CD8-positive, alpha-beta T cell (primary cell): ENCODE measurements at regions of chr5 and their contacts with region 1.

Region 1: GRCh38 chr5:135944967-135945560 is 9.7 kb downstream of the LECT2 start:
- DNase-seq: peak in 3 of 9 experiments; percentile 7 to 63 (median 56)
- ATAC-seq: no peak
- H3K4me3 ChIP-seq: no peak overlapping the region
- H3K4me3 Mint-ChIP-seq: no peak overlapping the region
- H3K27ac ChIP-seq: no peak overlapping the region
- H3K27ac Mint-ChIP-seq: no peak overlapping the region
- H3K4me1 ChIP-seq: no peaks in the 10 kb centered on the region
- H3K4me1 Mint-ChIP-seq: no peaks in the 10 kb centered on the region
- H3K27me3 ChIP-seq: no peaks in the 10 kb centered on the region
- H3K27me3 Mint-ChIP-seq: peaks cover 16% of the 10 kb centered on the region
- CTCF ChIP-seq: peak; percentile 69

Region 2: GRCh38 chr5:136062366-136063274 is 117.6 kb after region 1 on chr5:
- CTCF ChIA-PET with region 1: interaction called, 4 read pairs
- POLR2A ChIA-PET with region 1: no interaction called
- intact Hi-C with region 1: loop called (anchors 1 to 2 kb)
- DNase-seq: peak in 2 of 9 experiments; percentile 51 to 57
- ATAC-seq: peak; percentile 55
- H3K4me3 ChIP-seq: no peak overlapping the region
- H3K4me3 Mint-ChIP-seq: no peak overlapping the region
- H3K27ac ChIP-seq: no peak overlapping the region
- H3K27ac Mint-ChIP-seq: no peak overlapping the region
- H3K4me1 ChIP-seq: no peaks in the 10 kb centered on the region
- H3K4me1 Mint-ChIP-seq: no peaks in the 10 kb centered on the region
- H3K27me3 ChIP-seq: no peaks in the 10 kb centered on the region
- H3K27me3 Mint-ChIP-seq: peaks cover 7% of the 10 kb centered on the region
- CTCF ChIP-seq: peak; percentile 14

Region 3: DNA sequence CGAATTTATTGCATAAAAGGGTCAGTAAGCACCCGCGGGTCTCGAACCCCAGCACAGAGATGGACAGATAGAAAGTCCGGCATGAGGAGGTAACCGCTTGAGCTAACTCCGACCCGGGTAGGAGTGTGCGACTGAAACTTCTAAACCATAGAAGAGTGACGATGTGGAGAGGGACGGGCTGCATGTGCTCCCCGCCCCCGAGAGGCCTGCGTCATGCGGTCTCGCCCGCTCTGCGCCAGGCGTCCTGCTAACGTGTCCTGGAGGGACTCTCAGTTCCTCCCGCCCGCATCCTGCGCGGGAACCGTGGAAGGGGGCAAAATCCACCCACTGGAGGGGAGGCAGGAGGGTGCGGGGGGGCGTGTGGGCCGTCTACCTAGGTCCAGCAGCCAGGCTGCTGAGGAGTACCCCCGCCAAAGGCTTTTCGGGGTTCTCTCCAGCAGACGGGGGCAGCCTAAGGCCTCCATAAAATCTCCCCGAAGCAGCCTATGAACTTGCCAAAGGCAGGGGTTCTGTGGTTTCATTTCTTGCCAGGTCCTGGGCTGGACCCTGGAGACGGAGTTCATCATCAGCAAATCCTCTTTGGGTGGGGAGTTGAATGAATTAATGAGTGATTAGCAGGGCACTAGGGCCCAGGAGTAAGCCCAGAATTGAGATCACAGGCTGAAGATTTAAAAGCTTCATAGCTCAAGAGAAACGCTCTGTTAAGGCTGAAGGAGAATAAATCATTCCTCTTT is 135.6 kb after region 1 on chr5:
- CTCF ChIA-PET with region 1: interaction called, 13 read pairs
- POLR2A ChIA-PET with region 1: no interaction called
- intact Hi-C with region 1: loop called (anchors 1 kb)
- DNase-seq: peak; percentile 10 to 75 (median 44)
- ATAC-seq: peak; percentile 96
- H3K4me3 ChIP-seq: peak overlapping the region; percentile 19 to 39
- H3K4me3 Mint-ChIP-seq: peak overlapping the region; percentile 77
- H3K27ac ChIP-seq: no peak overlapping the region
- H3K27ac Mint-ChIP-seq: peak overlapping the region; percentile 13
- H3K4me1 ChIP-seq: peaks cover 2% of the 10 kb centered on the region
- H3K4me1 Mint-ChIP-seq: peaks cover 4% of the 10 kb centered on the region
- H3K27me3 ChIP-seq: no peaks in the 10 kb centered on the region
- H3K27me3 Mint-ChIP-seq: peaks cover 30% of the 10 kb centered on the region
- CTCF ChIP-seq: no peak

Region 4: DNA sequence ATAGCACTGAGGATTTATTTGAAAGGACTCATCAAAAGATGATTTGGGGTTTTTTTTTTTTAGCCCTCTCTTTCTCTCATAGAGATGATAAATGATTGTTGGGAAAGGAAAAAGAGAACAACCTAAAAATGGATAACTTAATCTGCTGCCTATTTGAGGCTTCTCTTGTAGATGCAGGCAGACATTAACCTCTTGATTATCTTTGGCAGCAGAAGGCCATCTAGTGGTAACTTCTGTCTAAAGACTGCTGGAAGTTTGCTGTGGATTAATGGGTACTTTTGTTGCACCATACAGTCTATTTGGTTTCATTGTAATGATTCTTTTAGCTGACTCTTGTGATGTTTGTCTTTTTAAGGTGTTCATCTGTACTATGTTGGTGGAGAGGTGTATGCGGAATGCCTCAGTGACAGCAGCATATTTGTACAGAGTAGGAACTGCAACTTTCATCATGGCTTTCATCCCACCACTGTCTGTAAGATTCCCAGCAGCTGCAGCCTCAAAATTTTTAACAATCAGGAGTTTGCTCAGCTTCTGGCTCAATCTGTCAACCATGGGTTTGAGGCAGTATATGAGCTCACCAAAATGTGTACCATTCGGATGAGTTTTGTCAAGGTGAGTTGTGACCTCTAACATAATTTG is 229.1 kb after region 1 on chr5:
- CTCF ChIA-PET with region 1: no interaction called
- POLR2A ChIA-PET with region 1: no interaction called
- intact Hi-C with region 1: loop called in 1 of 2 experiments (anchors 1 kb)
- DNase-seq: peak in 2 of 9 experiments; percentile 12 to 26
- ATAC-seq: no peak
- H3K4me3 ChIP-seq: no peak overlapping the region
- H3K4me3 Mint-ChIP-seq: no peak overlapping the region
- H3K27ac ChIP-seq: no peak overlapping the region
- H3K27ac Mint-ChIP-seq: no peak overlapping the region
- H3K4me1 ChIP-seq: no peaks in the 10 kb centered on the region
- H3K4me1 Mint-ChIP-seq: no peaks in the 10 kb centered on the region
- H3K27me3 ChIP-seq: no peaks in the 10 kb centered on the region
- H3K27me3 Mint-ChIP-seq: no peaks in the 10 kb centered on the region
- CTCF ChIP-seq: no peak

Region 5: DNA sequence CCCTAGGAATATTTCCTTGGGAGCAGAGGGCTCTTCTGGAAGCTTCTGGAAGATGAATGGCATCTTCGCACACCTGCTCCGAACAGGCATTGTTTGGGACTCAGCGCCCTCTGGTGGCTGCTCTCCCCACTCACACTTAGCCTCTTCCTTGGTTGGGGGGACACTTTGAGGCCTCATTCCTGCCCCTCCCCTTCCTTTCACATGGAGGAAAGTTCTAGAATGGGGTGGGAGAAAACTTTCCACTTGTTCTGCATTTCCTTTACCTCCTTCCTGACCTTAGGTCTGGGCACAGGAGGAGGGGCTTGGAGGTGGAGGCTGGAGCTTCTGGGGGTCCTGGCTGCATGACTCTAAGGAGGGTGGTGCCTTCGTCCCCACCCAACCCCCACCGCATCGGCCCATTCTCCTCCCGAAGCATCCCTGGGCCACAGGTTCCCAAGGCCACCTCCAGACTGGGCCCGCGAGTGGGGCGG is 267.2 kb after region 1 on chr5:
- CTCF ChIA-PET with region 1: interaction called, 3 read pairs
- POLR2A ChIA-PET with region 1: no interaction called
- intact Hi-C with region 1: loop called (anchors 1 to 2 kb)
- DNase-seq: peak in 8 of 9 experiments; percentile 11 to 65 (median 48)
- ATAC-seq: no peak
- H3K4me3 ChIP-seq: no peak overlapping the region
- H3K4me3 Mint-ChIP-seq: no peak overlapping the region
- H3K27ac ChIP-seq: no peak overlapping the region
- H3K27ac Mint-ChIP-seq: no peak overlapping the region
- H3K4me1 ChIP-seq: no peaks in the 10 kb centered on the region
- H3K4me1 Mint-ChIP-seq: no peaks in the 10 kb centered on the region
- H3K27me3 ChIP-seq: no peaks in the 10 kb centered on the region
- H3K27me3 Mint-ChIP-seq: peaks cover 13% of the 10 kb centered on the region
- CTCF ChIP-seq: peak; percentile 66

Region 6: GRCh38 chr5:137743031-137743640 is 1798.1 kb after region 1 on chr5:
- CTCF ChIA-PET with region 1: no interaction called
- POLR2A ChIA-PET with region 1: no interaction called
- intact Hi-C with region 1: no loop called
- DNase-seq: peak in 8 of 9 experiments; percentile 43 to 85 (median 64)
- ATAC-seq: peak; percentile 95
- H3K4me3 ChIP-seq: no peak overlapping the region
- H3K4me3 Mint-ChIP-seq: no peak overlapping the region
- H3K27ac ChIP-seq: no peak overlapping the region
- H3K27ac Mint-ChIP-seq: no peak overlapping the region
- H3K4me1 ChIP-seq: peaks cover 17% of the 10 kb centered on the region
- H3K4me1 Mint-ChIP-seq: peaks cover 17% of the 10 kb centered on the region
- H3K27me3 ChIP-seq: no peaks in the 10 kb centered on the region
- H3K27me3 Mint-ChIP-seq: no peaks in the 10 kb centered on the region
- CTCF ChIP-seq: peak; percentile 74